ENCODE measurements at regions of chr4 and their contacts with region 1.

Region 1: GRCh38 chr4:141346144-141346543 is 125.4 kb downstream of the ZNF330 start:
- DNase-seq: no peak
- H3K4me3 ChIP-seq: no peak overlapping the region
- H3K27ac ChIP-seq: no peak overlapping the region
- H3K4me1 ChIP-seq: no peaks in the 10 kb centered on the region
- H3K27me3 ChIP-seq: no peaks in the 10 kb centered on the region
- CTCF ChIP-seq: peak; percentile 58

Region 2: DNA sequence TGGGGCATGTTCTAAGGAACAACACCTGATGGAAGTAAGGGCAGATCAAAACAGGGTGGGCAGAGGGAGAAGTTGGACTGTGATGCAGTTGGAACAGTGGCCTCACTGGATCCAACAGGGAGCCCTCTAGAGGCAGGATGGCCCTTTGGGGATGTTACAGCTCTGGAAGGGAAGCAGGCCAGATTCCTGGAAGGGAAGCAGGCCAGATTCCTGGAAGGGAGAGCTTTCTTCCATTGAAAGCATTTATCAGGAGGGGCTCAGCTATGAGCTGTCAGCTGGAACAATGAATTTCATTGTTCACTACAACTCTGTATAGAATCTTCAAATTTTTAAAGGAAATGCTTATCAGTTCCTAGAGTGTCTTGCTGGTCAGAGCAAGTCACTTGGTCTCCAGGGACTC is 308.0 kb after region 1 on chr4:
- intact Hi-C with region 1: loop called (anchors 10 kb)
- DNase-seq: peak; percentile 54
- H3K4me3 ChIP-seq: no peak overlapping the region
- H3K27ac ChIP-seq: peak overlapping the region; percentile 3
- H3K4me1 ChIP-seq: no peaks in the 10 kb centered on the region
- H3K27me3 ChIP-seq: no peaks in the 10 kb centered on the region
- CTCF ChIP-seq: no peak

Region 3: GRCh38 chr4:141711014-141711610 is 365.0 kb after region 1 on chr4:
- intact Hi-C with region 1: loop called (anchors 2 kb)
- DNase-seq: no peak
- H3K4me3 ChIP-seq: no peak overlapping the region
- H3K27ac ChIP-seq: no peak overlapping the region
- H3K4me1 ChIP-seq: no peaks in the 10 kb centered on the region
- H3K27me3 ChIP-seq: no peaks in the 10 kb centered on the region
- CTCF ChIP-seq: peak; percentile 48

Measured in colonic mucosa (tissue), 4 donors.